Activated naive CD4-positive, alpha-beta T cell treated with anti-CD3 and anti-CD28 coated beads for 36 hours (primary cell): ENCODE measurements at regions of chr5 and their contacts with region 1.

Region 1: DNA sequence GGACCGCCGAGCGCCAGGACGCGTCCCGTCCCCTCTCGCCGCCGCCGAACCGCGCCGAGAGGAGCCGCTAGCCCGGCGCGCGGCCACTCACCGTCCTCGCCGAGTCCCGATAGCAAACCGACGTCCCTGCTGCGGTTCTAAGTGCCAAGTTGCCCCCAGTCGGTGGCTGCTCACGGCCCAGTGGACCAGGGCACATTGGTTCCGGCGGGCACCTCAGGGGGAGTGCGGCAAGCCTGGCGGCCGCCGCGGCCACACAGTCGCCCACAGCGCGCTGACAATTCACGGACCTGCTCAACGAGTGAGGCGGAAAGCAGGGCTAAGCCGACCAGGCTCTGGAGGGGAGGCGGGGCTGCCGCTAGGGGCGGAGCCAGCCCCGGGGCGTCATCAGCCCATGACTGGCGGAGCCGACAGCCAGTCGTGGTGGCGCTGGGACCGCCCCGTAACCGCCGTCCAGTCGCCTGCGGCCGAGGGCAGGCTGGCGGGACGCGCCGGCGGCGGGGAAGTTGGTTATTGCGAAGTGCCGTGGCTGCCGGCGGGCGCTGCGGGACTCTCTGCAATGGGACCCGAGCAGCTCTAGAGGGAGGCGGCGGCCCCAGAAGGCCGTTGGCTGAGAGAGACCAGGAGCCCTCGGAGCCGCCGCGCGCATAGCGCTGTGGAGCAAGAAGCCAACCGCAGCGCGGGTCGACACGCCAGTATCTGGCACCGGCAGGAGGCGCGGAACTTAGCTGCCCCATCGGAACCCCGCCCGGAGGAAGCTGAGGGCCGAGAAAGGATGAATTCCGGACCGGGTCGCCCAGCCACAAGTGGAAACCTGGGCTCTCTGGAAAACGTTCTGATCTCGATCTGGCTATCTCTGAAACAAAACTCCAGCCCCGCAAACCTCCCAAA is at the start of gene MARCHF3:
- DNase-seq: peak; percentile 94
- H3K4me3 Mint-ChIP-seq: peak within 1 kb of the TSS; percentile 93
- H3K27ac Mint-ChIP-seq: peak within 1 kb of the TSS; percentile 75
- H3K4me1 Mint-ChIP-seq: peaks cover 31% of the 10 kb centered on the region
- H3K27me3 Mint-ChIP-seq: no peaks in the 10 kb centered on the region
- total RNA-seq, gene MARCHF3: 11.8 TPM

Region 2: DNA sequence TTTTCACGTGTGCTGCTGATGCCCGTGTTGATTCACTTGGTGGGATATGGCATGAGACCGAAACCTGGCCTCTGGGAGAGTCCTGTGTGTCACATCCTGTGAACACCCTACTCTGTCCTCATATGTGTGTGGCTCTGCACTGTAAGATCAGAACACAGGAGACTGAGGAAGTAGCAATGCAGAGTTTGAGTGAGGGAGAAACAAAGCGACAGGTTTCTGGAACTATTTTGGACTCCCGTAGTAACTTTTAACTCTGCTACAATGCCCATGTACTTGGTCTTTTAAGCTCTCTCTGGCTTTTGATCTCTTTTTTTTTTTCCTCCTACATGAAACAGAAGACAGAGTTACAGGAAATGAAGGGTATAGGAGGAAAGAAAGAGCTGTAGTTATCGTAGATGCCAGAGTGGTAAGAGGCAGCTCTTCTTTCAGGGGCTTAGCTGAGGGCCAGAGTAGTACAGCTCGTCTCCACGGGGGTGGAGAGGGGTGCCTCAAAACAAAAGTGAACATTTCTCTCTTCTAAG is 580.7 kb before region 1 on chr5:
- CTCF ChIA-PET with region 1: no interaction called
- intact Hi-C with region 1: loop called (anchors 5 kb)
- DNase-seq: peak; percentile 90
- H3K4me3 Mint-ChIP-seq: peak overlapping the region; percentile 82
- H3K27ac Mint-ChIP-seq: peak overlapping the region; percentile 100
- H3K4me1 Mint-ChIP-seq: peaks cover 81% of the 10 kb centered on the region
- H3K27me3 Mint-ChIP-seq: no peaks in the 10 kb centered on the region

Region 3: DNA sequence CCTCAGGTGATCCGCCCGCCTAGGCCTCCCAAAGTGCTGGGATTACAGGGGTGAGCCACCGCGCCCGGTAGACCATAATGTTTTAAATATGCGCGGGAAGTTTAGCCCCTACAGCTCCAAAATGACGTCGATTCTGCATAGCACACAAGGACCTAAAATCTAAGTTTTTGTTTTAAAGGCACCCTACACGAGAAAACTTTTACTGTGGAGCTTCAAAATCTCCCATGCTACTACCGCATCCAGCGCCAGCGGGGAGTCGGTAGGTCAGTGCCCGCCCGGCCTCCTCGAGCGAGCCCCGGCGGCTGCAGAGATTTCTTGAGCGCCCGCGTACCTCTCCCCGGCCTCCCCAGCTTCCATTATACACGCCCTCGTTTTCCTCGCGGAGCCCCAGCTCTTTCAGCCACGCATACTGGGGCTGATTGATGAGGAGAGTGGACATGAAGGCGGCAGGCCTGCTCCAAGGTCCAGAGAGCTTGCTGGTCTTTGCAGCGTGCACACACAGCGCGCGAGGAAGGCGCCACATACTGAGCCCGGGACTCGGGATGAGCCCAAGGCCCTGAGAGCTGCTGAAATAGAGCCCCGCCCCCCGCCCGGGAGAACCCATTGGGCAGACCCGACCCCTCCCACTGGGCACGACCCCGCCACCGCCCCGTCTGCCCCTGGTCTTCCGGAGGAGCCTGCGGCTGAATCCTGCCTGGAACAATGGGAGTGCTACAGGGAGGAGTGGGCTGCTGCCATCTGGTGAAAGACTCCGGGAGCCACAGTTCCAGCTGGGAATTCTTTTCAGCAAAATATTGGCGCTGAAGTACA is 435.6 kb before region 1 on chr5 and contains the start of gene ALDH7A1:
- CTCF ChIA-PET with region 1: no interaction called
- intact Hi-C with region 1: no loop called
- DNase-seq: peak; percentile 57
- H3K4me3 Mint-ChIP-seq: peak within 1 kb of the TSS; percentile 80
- H3K27ac Mint-ChIP-seq: no peak within 1 kb of the TSS
- H3K4me1 Mint-ChIP-seq: peaks cover 6% of the 10 kb centered on the region
- H3K27me3 Mint-ChIP-seq: peaks cover 6% of the 10 kb centered on the region
- total RNA-seq, gene ALDH7A1: 10.3 to 11.3 TPM

Region 4: DNA sequence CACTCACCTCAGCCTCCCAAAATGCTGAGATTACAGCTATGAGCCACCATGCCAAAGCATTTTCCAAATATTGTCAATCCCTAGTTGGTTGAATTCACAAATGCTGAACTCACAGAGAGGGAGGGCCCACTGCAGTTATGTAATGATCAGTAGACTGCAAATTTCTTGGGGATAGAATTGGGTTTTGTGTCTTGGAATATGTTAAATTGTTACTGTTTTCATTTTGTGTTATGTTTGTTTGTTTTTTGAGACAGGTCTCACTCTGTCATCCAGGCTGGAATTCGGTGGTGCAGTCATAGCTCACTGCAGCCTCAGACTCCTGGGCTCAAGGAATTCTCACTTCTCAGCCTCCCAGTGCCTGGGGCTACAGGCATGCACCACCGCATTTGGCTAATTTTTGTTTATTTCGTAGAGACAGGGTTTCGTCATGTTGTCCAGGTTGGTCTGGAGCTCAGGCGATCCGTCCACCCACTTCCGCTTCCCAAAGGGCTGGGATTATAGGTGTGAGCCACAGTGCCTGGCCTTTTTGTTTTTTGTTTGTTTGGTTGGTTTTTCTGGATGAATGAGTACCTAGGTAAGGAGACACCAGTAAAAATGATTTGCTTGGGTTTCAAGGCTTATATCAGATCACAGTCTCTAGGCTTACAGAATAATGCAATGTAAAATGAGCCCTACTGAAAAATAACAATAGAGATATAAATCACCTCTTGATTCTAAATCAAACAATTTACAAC is 285.1 kb before region 1 on chr5:
- CTCF ChIA-PET with region 1: no interaction called
- intact Hi-C with region 1: loop called (anchors 1 kb)
- DNase-seq: no peak
- H3K4me3 Mint-ChIP-seq: no peak overlapping the region
- H3K27ac Mint-ChIP-seq: peak overlapping the region; percentile 24
- H3K4me1 Mint-ChIP-seq: peaks cover 41% of the 10 kb centered on the region
- H3K27me3 Mint-ChIP-seq: no peaks in the 10 kb centered on the region

Region 5: GRCh38 chr5:126896170-126896717 is 134.3 kb before region 1 on chr5:
- CTCF ChIA-PET with region 1: no interaction called
- intact Hi-C with region 1: no loop called
- DNase-seq: no peak
- H3K4me3 Mint-ChIP-seq: no peak overlapping the region
- H3K27ac Mint-ChIP-seq: no peak overlapping the region
- H3K4me1 Mint-ChIP-seq: no peaks in the 10 kb centered on the region
- H3K27me3 Mint-ChIP-seq: no peaks in the 10 kb centered on the region

Region 6: GRCh38 chr5:126939877-126940276 is 90.6 kb before region 1 on chr5:
- CTCF ChIA-PET with region 1: no interaction called
- intact Hi-C with region 1: loop called (anchors 1 kb)
- DNase-seq: no peak
- H3K4me3 Mint-ChIP-seq: no peak overlapping the region
- H3K27ac Mint-ChIP-seq: no peak overlapping the region
- H3K4me1 Mint-ChIP-seq: peaks cover 12% of the 10 kb centered on the region
- H3K27me3 Mint-ChIP-seq: no peaks in the 10 kb centered on the region

Region 7: GRCh38 chr5:127011961-127012644 is 18.4 kb before region 1 on chr5:
- CTCF ChIA-PET with region 1: no interaction called
- intact Hi-C with region 1: loop called (anchors 1 kb)
- DNase-seq: peak; percentile 35
- H3K4me3 Mint-ChIP-seq: no peak overlapping the region
- H3K27ac Mint-ChIP-seq: peak overlapping the region; percentile 78
- H3K4me1 Mint-ChIP-seq: peaks cover 56% of the 10 kb centered on the region
- H3K27me3 Mint-ChIP-seq: no peaks in the 10 kb centered on the region

Region 8: DNA sequence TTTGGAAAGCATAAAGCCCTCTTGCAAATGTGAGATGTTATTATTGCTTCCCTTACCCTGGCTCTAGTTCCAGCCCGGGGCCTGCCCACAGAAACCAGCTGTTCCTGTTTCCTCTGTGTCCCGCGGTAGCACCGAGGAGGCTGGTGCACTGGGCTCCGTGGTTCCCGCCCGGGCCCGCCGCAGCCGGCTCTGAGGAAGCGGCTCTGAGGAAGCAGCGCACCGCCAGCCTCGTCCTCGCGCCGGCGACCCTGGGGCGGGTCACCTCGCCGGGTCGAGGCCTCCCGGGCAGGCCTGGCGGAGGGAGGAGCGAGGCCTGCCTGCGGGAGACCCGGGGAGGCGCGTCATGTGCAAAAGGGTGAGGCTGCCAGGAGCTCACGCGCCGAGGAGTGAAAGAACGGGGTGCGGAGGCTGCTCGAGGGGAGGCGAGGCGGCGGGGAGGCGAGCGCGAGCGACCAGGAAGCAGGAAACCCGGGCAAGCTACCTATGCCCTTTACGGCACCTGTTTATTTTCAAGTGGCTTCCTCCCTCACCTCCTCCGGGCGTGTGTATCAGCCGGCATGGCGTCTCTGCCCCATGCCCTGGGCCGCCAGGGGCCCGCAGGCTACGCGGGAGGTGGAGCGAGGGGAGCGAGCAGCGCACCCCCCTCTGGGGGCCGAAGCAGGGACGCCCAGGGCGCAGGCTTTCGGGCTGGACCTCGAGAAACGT is 198.8 kb after region 1 on chr5:
- CTCF ChIA-PET with region 1: no interaction called
- intact Hi-C with region 1: loop called (anchors 1 kb)
- DNase-seq: peak; percentile 62
- H3K4me3 Mint-ChIP-seq: peak overlapping the region; percentile 66
- H3K27ac Mint-ChIP-seq: no peak overlapping the region
- H3K4me1 Mint-ChIP-seq: peaks cover 8% of the 10 kb centered on the region
- H3K27me3 Mint-ChIP-seq: no peaks in the 10 kb centered on the region

Region 9: DNA sequence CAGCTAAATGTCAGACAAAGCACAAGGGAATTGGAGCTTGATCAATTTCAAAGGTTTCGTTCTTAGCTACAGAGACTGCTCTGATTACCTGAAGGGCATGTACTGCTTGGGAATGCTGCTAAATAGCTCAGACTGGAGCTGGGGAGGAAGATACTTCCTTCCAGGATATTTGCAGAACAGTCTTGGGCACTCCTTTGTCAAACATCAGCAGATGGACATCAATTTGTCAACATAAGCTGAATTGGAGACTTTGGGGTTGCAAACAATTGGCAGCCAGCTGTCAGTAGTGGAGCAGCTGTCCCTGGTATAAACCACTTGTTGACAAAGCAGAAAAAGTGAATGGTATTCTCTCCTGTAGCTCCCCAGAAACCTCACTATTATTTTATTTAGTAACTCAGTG is 854.7 kb after region 1 on chr5:
- CTCF ChIA-PET with region 1: no interaction called
- intact Hi-C with region 1: no loop called
- DNase-seq: no peak
- H3K4me3 Mint-ChIP-seq: no peak overlapping the region
- H3K27ac Mint-ChIP-seq: no peak overlapping the region
- H3K4me1 Mint-ChIP-seq: no peaks in the 10 kb centered on the region
- H3K27me3 Mint-ChIP-seq: no peaks in the 10 kb centered on the region